Prostate gland (tissue), 2 donors: ENCODE measurements at regions of chr18 and their contacts with region 1.

Region 1: GRCh38 chr18:712401-713134 is at the start of gene ENOSF1:
- DNase-seq: peak; percentile 86
- H3K4me3 ChIP-seq: peak within 1 kb of the TSS; percentile 49 to 64
- H3K27ac ChIP-seq: peak within 1 kb of the TSS; percentile 71 to 83
- H3K4me1 ChIP-seq: peaks cover 3% of the 10 kb centered on the region
- H3K27me3 ChIP-seq: no peaks in the 10 kb centered on the region
- CTCF ChIP-seq: peak; percentile 61 to 86 (median 78)
- POLR2A ChIP-seq: peak; percentile 32
- total RNA-seq, gene ENOSF1: 84.8 to 114 TPM

Region 2: GRCh38 chr18:658001-658946 is 54.3 kb before region 1 on chr18:
- intact Hi-C with region 1: loop called (anchors 5 kb)
- DNase-seq: peak; percentile 82
- H3K4me3 ChIP-seq: peak overlapping the region; percentile 55 to 59
- H3K27ac ChIP-seq: peak overlapping the region; percentile 27 to 64
- H3K4me1 ChIP-seq: no peaks in the 10 kb centered on the region
- H3K27me3 ChIP-seq: no peaks in the 10 kb centered on the region
- CTCF ChIP-seq: no peak
- POLR2A ChIP-seq: peak; percentile 60